CD4-positive, alpha-beta memory T cell (primary cell): ENCODE measurements at regions of chr3 and their contacts with region 1.

Region 1: DNA sequence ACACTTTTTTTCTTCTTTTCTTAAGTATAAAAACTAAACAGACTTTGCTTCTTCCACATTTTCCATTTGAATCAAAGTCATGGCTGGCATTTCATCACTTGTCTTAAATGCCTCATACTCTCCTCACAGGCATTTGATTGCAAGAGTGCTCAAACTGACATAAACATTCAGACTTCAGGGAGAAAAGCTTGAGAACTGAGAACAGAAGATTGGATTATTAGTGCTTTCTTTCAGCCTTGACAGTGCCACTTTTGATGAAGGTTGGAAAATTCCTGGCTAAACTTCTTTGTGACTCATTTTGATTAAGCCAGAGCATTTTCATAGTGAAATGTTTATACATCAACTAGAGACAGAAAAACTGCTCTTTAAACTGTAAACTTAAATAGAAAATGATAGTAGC is 544.4 kb downstream of the DIPK2A start:
- DNase-seq: no peak
- H3K4me3 ChIP-seq: no peak overlapping the region
- H3K4me3 Mint-ChIP-seq: no peak overlapping the region
- H3K27ac ChIP-seq: no peak overlapping the region
- H3K27ac Mint-ChIP-seq: no peak overlapping the region
- H3K4me1 ChIP-seq: no peaks in the 10 kb centered on the region
- H3K4me1 Mint-ChIP-seq: no peaks in the 10 kb centered on the region
- H3K27me3 ChIP-seq: no peaks in the 10 kb centered on the region
- H3K27me3 Mint-ChIP-seq: peaks cover 0 to 6% of the 10 kb centered on the region in 2 donors

Region 2: DNA sequence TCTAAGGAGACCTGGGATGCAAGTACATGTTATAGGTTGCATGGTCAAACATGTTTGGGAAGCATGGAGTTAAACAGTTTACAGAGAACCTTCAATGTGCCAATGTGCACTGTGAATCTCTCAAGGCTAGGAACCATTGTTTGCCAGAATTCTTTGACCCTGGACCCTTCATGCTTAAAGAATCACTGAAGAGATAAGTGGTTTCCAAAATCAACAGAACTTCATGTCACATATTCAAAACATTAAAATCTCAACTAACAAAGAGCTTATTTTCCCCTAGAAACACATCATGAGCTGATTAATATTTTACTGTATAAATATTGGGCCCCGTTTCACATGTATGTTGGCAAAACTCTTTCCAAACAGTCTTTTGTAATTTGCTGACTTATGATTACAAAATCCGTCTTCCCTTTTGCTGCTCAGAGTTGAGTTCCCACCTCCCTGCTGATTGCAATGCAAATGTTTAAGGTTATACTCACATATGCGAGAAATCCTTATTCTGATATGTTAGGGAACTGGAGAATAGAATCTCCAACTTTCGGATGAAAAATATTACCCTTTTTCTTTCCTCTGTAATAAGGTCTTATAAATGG is 164.2 kb before region 1 on chr3:
- CTCF ChIA-PET with region 1: no interaction called
- POLR2A ChIA-PET with region 1: no interaction called
- intact Hi-C with region 1: loop called (anchors 10 kb)
- DNase-seq: no peak
- H3K4me3 ChIP-seq: no peak overlapping the region
- H3K4me3 Mint-ChIP-seq: no peak overlapping the region
- H3K27ac ChIP-seq: no peak overlapping the region
- H3K27ac Mint-ChIP-seq: no peak overlapping the region
- H3K4me1 ChIP-seq: no peaks in the 10 kb centered on the region
- H3K4me1 Mint-ChIP-seq: no peaks in the 10 kb centered on the region
- H3K27me3 ChIP-seq: no peaks in the 10 kb centered on the region
- H3K27me3 Mint-ChIP-seq: no peaks in the 10 kb centered on the region

Region 3: GRCh38 chr3:144429719-144430121 is 86.3 kb before region 1 on chr3:
- CTCF ChIA-PET with region 1: no interaction called
- POLR2A ChIA-PET with region 1: no interaction called
- intact Hi-C with region 1: no loop called
- DNase-seq: no peak
- H3K4me3 ChIP-seq: no peak overlapping the region
- H3K4me3 Mint-ChIP-seq: no peak overlapping the region
- H3K27ac ChIP-seq: no peak overlapping the region
- H3K27ac Mint-ChIP-seq: no peak overlapping the region
- H3K4me1 ChIP-seq: no peaks in the 10 kb centered on the region
- H3K4me1 Mint-ChIP-seq: no peaks in the 10 kb centered on the region
- H3K27me3 ChIP-seq: no peaks in the 10 kb centered on the region
- H3K27me3 Mint-ChIP-seq: no peaks in the 10 kb centered on the region

Region 4: GRCh38 chr3:144502402-144502801 is 13.6 kb before region 1 on chr3:
- CTCF ChIA-PET with region 1: no interaction called
- POLR2A ChIA-PET with region 1: no interaction called
- intact Hi-C with region 1: no loop called
- DNase-seq: no peak
- H3K4me3 ChIP-seq: no peak overlapping the region
- H3K4me3 Mint-ChIP-seq: no peak overlapping the region
- H3K27ac ChIP-seq: no peak overlapping the region
- H3K27ac Mint-ChIP-seq: no peak overlapping the region
- H3K4me1 ChIP-seq: no peaks in the 10 kb centered on the region
- H3K4me1 Mint-ChIP-seq: no peaks in the 10 kb centered on the region
- H3K27me3 ChIP-seq: no peaks in the 10 kb centered on the region
- H3K27me3 Mint-ChIP-seq: no peaks in the 10 kb centered on the region